B cell (primary cell): ENCODE measurements at regions of chr7 and their contacts with region 1.

Region 1: DNA sequence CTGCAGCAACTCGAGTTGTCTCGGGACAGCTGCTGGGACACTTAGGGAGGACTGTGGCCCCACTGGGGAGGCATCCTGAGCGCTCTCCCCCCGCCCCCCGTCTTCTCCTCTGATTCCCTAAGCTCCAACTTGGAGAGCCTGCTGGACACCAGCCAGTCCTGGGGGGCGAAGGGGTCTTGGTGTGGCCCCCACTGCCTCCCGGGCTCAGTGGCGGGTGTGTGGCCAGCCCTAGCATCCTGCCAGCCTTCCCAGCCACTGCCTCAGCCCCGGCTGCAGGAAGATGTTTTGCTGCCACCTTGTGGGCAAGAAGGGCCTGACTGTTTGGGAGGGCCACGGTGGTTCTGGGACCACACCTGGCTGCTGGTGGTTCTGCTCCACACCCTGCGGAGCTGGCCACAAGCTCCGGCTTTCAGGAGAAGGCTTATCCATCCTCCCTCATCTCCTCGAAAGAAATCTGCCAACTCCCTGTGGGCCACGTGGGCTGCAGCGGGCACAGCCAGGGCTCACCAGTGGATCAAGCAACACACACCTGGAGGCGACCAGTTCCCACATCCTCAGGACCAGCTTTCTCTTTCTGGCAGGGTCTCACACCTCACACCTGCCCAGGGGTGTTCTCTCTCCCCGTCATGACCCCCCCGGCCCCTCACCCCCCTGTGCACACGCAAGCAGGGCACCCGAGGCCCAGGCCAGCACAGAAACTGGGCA is 24.8 kb downstream of the AGAP3 start:
- DNase-seq: peak; percentile 80
- ATAC-seq: peak; percentile 83
- H3K4me3 ChIP-seq: no peak overlapping the region
- H3K4me3 Mint-ChIP-seq: no peak overlapping the region
- H3K27ac ChIP-seq: no peak overlapping the region
- H3K27ac Mint-ChIP-seq: no peak overlapping the region
- H3K4me1 ChIP-seq: peaks cover 0 to 6% of the 10 kb centered on the region in 2 donors
- H3K4me1 Mint-ChIP-seq: peaks cover 2% of the 10 kb centered on the region
- H3K27me3 ChIP-seq: peaks cover 0 to 27% (median 8%) of the 10 kb centered on the region in 4 experiments
- H3K27me3 Mint-ChIP-seq: peaks cover 20% of the 10 kb centered on the region
- CTCF ChIP-seq: peak; percentile 93

Region 2: DNA sequence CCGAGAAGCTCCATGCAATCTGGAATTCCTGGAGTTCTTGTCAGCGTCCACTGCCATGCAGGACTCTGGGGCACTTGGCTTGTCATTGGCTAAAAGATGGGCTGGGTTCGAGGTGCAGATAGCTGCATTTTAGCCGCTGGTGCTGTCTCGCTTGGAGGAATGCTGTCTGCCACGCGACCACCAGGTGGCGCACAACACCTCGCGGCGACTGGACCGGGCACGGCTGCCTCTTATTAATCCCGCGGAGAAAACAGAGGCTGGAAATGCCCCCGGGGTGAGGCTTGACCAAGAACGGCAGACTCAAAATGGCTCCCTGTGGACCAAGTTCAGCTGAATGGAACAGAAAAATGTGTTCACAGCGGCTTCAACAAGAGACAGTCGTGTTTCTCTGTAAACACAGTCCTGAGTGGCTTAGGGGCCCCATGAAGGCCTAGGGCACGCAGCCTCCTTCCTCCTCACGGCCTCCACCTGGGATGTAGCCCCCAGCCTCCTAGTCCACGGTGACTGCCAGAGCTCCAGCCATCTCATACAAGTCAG is 212.6 kb before region 1 on chr7:
- CTCF ChIA-PET with region 1: interaction called, 36 read pairs
- POLR2A ChIA-PET with region 1: no interaction called
- intact Hi-C with region 1: no loop called
- DNase-seq: peak; percentile 79
- ATAC-seq: peak; percentile 70
- H3K4me3 ChIP-seq: peak overlapping the region in 2 of 5 experiments; percentile 29 to 39
- H3K4me3 Mint-ChIP-seq: peak overlapping the region; percentile 51
- H3K27ac ChIP-seq: peak overlapping the region in 1 of 2 donors; percentile 81
- H3K27ac Mint-ChIP-seq: peak overlapping the region; percentile 28
- H3K4me1 ChIP-seq: peaks cover 26 to 55% of the 10 kb centered on the region in 2 donors
- H3K4me1 Mint-ChIP-seq: peaks cover 38% of the 10 kb centered on the region
- H3K27me3 ChIP-seq: peaks cover 0 to 18% (median 9%) of the 10 kb centered on the region in 4 experiments
- H3K27me3 Mint-ChIP-seq: peaks cover 44% of the 10 kb centered on the region
- CTCF ChIP-seq: peak; percentile 96

Region 3: GRCh38 chr7:150962553-150963399 is 148.3 kb before region 1 on chr7:
- CTCF ChIA-PET with region 1: interaction called, 44 read pairs
- POLR2A ChIA-PET with region 1: no interaction called
- intact Hi-C with region 1: no loop called
- DNase-seq: peak; percentile 67
- ATAC-seq: peak; percentile 82
- H3K4me3 ChIP-seq: no peak overlapping the region
- H3K4me3 Mint-ChIP-seq: no peak overlapping the region
- H3K27ac ChIP-seq: no peak overlapping the region
- H3K27ac Mint-ChIP-seq: no peak overlapping the region
- H3K4me1 ChIP-seq: peaks cover 3 to 5% of the 10 kb centered on the region in 2 donors
- H3K4me1 Mint-ChIP-seq: peaks cover 2% of the 10 kb centered on the region
- H3K27me3 ChIP-seq: peaks cover 0 to 49% (median 5%) of the 10 kb centered on the region in 4 experiments
- H3K27me3 Mint-ChIP-seq: peaks cover 48% of the 10 kb centered on the region
- CTCF ChIP-seq: peak; percentile 77

Region 4: GRCh38 chr7:151057989-151058780 is 52.9 kb before region 1 on chr7:
- CTCF ChIA-PET with region 1: interaction called, 4 read pairs
- POLR2A ChIA-PET with region 1: no interaction called
- intact Hi-C with region 1: loop called (anchors 1 kb)
- DNase-seq: peak; percentile 98
- ATAC-seq: peak; percentile 92
- H3K4me3 ChIP-seq: peak overlapping the region; percentile 67 to 90 (median 73)
- H3K4me3 Mint-ChIP-seq: peak overlapping the region; percentile 96
- H3K27ac ChIP-seq: peak overlapping the region; percentile 79 to 82
- H3K27ac Mint-ChIP-seq: peak overlapping the region; percentile 94
- H3K4me1 ChIP-seq: peaks cover 23 to 40% of the 10 kb centered on the region in 2 donors
- H3K4me1 Mint-ChIP-seq: peaks cover 36% of the 10 kb centered on the region
- H3K27me3 ChIP-seq: no peaks in the 10 kb centered on the region
- H3K27me3 Mint-ChIP-seq: no peaks in the 10 kb centered on the region
- CTCF ChIP-seq: no peak

Region 5: GRCh38 chr7:151085691-151086620 is 25.1 kb before region 1 on chr7 and contains the start of gene AGAP3:
- CTCF ChIA-PET with region 1: interaction called, 6 read pairs
- POLR2A ChIA-PET with region 1: no interaction called
- intact Hi-C with region 1: loop called (anchors 1 kb)
- DNase-seq: peak; percentile 59
- ATAC-seq: peak; percentile 40
- H3K4me3 ChIP-seq: peak within 1 kb of the TSS in 4 of 5 experiments; percentile 47 to 75 (median 68)
- H3K4me3 Mint-ChIP-seq: peak within 1 kb of the TSS; percentile 91
- H3K27ac ChIP-seq: peak within 1 kb of the TSS in 1 of 2 donors; percentile 33
- H3K27ac Mint-ChIP-seq: peak within 1 kb of the TSS; percentile 77
- H3K4me1 ChIP-seq: peaks cover 58 to 59% of the 10 kb centered on the region in 2 donors
- H3K4me1 Mint-ChIP-seq: peaks cover 48% of the 10 kb centered on the region
- H3K27me3 ChIP-seq: peaks cover 0 to 54% (median 17%) of the 10 kb centered on the region in 4 experiments
- H3K27me3 Mint-ChIP-seq: peaks cover 23% of the 10 kb centered on the region
- CTCF ChIP-seq: no peak
- total RNA-seq, gene AGAP3: 20.2 and 21.1 TPM in 2 replicates

Region 6: GRCh38 chr7:151123822-151124464 is 12.8 kb after region 1 on chr7:
- CTCF ChIA-PET with region 1: interaction called, 11 read pairs
- POLR2A ChIA-PET with region 1: no interaction called
- intact Hi-C with region 1: no loop called
- DNase-seq: peak; percentile 85
- ATAC-seq: peak; percentile 98
- H3K4me3 ChIP-seq: no peak overlapping the region
- H3K4me3 Mint-ChIP-seq: no peak overlapping the region
- H3K27ac ChIP-seq: no peak overlapping the region
- H3K27ac Mint-ChIP-seq: no peak overlapping the region
- H3K4me1 ChIP-seq: peaks cover 0 to 6% of the 10 kb centered on the region in 2 donors
- H3K4me1 Mint-ChIP-seq: peaks cover 3% of the 10 kb centered on the region
- H3K27me3 ChIP-seq: no peaks in the 10 kb centered on the region
- H3K27me3 Mint-ChIP-seq: peaks cover 3% of the 10 kb centered on the region
- CTCF ChIP-seq: peak; percentile 93

Region 7: GRCh38 chr7:151198945-151199848 is 88.1 kb after region 1 on chr7:
- CTCF ChIA-PET with region 1: no interaction called
- POLR2A ChIA-PET with region 1: no interaction called
- intact Hi-C with region 1: no loop called
- DNase-seq: no peak
- ATAC-seq: no peak
- H3K4me3 ChIP-seq: no peak overlapping the region
- H3K4me3 Mint-ChIP-seq: no peak overlapping the region
- H3K27ac ChIP-seq: no peak overlapping the region
- H3K27ac Mint-ChIP-seq: no peak overlapping the region
- H3K4me1 ChIP-seq: no peaks in the 10 kb centered on the region
- H3K4me1 Mint-ChIP-seq: no peaks in the 10 kb centered on the region
- H3K27me3 ChIP-seq: peaks cover 0 to 14% (median 1%) of the 10 kb centered on the region in 4 experiments
- H3K27me3 Mint-ChIP-seq: peaks cover 5% of the 10 kb centered on the region
- CTCF ChIP-seq: no peak